ENCODE measurements at regions of chr20 and their contacts with region 1.

Region 1: GRCh38 chr20:20237093-20237959 is 130.6 kb upstream of the INSM1 start:
- DNase-seq: peak in 1 of 2 donors; percentile 49
- ATAC-seq: peak; percentile 51 to 73
- H3K4me3 ChIP-seq: no peak overlapping the region
- H3K27ac ChIP-seq: peak overlapping the region in 2 of 4 donors; percentile 8 to 31
- H3K4me1 ChIP-seq: peaks cover 10 to 11% of the 10 kb centered on the region in 2 donors
- H3K27me3 ChIP-seq: no peaks in the 10 kb centered on the region
- CTCF ChIP-seq: peak; percentile 75 to 84 (median 79)
- POLR2A ChIP-seq: no peak

Region 2: DNA sequence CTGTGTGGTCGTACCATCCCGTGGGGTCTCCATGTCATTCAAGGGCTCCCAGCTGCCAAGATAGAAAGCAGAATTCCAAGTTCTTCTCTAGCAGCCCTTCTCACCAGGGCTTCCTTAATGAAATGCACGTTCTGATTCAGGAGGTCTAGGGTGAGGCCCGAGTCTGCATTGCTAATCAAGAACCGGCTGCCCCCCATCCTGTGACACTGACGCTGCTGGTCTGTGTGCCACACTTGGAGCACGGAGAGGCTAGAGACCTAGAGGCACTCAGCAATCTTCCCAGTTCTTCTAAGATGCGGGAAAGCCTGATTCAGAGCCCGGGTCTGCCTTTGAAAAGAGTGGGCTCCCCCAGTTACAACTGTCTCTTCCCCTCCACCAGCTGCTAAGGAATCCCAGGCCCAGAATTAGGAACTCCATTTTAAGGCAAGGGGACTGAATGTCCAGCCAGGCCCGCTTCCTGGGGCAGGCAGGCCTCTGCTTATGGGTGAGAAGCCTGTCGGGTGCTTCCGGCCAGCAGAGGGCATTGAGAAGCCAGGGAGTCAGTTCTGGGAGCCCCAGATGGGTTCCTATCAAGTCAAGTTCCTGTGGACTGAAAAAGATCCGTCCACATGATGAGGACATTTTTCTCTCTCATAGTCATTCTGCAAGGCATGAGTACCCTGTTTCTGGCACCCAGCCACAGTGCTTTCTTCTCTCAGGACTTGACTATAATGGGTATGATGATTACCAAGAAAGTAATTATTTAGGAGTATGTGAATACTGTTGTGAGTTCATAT is 549.1 kb before region 1 on chr20:
- in situ Hi-C with region 1: no loop called
- intact Hi-C with region 1: no loop called
- DNase-seq: peak; percentile 74 to 80
- ATAC-seq: peak; percentile 88 to 89
- H3K4me3 ChIP-seq: no peak overlapping the region
- H3K27ac ChIP-seq: peak overlapping the region in 3 of 4 donors; percentile 25 to 64 (median 29)
- H3K4me1 ChIP-seq: peaks cover 13 to 21% of the 10 kb centered on the region in 2 donors
- H3K27me3 ChIP-seq: no peaks in the 10 kb centered on the region
- CTCF ChIP-seq: peak; percentile 57 to 77 (median 64)
- POLR2A ChIP-seq: no peak

Region 3: GRCh38 chr20:20130399-20130798 is 106.9 kb before region 1 on chr20:
- in situ Hi-C with region 1: no loop called
- intact Hi-C with region 1: loop called (anchors 1 kb)
- DNase-seq: no peak
- ATAC-seq: peak; percentile 53 to 87
- H3K4me3 ChIP-seq: no peak overlapping the region
- H3K27ac ChIP-seq: no peak overlapping the region
- H3K4me1 ChIP-seq: peaks cover 3 to 10% of the 10 kb centered on the region in 2 donors
- H3K27me3 ChIP-seq: no peaks in the 10 kb centered on the region
- CTCF ChIP-seq: peak in 3 of 5 experiments; percentile 28 to 41 (median 38)
- POLR2A ChIP-seq: no peak

Measured in gastrocnemius medialis (tissue), 4 donors.